Prostate gland (tissue), 2 donors: ENCODE measurements at regions of chr1 and their contacts with region 1.

Region 1: GRCh38 chr1:44002606-44003157 is 11.3 kb downstream of the CCDC24 start:
- DNase-seq: no peak
- H3K4me3 ChIP-seq: no peak overlapping the region
- H3K27ac ChIP-seq: no peak overlapping the region
- H3K4me1 ChIP-seq: no peaks in the 10 kb centered on the region
- H3K27me3 ChIP-seq: no peaks in the 10 kb centered on the region
- CTCF ChIP-seq: no peak
- POLR2A ChIP-seq: no peak

Region 2: DNA sequence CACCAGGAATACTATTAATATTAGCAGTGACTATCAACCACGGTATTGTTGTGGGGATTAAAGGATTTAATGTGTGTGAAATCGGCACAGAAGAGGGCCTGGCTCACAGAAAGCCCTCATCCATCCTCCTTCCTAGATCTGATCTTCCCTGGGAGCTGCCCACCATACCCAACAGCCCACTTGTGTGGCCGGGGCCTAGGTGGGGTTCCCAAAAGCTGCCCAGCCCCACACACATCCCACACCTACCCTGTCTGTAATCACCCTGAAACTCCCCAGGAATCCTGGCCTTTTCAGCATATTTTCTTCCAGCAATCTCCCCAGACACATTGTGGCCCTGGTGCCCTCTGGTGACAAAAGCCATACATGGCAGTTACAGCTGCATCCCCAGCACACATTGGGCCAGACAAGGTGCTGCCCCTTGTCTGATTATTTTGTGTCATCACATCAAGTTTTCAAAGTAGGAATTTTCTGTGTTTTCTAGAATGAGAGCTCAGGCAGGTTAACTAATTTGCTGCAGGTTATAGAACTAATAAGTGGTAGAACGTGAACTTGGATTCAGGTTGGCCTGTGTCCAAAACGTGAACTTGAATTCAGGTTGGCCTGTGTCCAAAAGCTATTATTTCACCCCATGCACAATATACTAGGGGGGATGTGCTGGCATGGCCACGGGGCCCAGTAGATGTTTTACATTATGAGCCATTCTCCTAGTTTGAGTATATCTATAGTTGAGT is 33.9 kb after region 1 on chr1:
- intact Hi-C with region 1: loop called (anchors 2 kb)
- DNase-seq: peak; percentile 61
- H3K4me3 ChIP-seq: no peak overlapping the region
- H3K27ac ChIP-seq: peak overlapping the region in 1 of 2 donors; percentile 28
- H3K4me1 ChIP-seq: no peaks in the 10 kb centered on the region
- H3K27me3 ChIP-seq: no peaks in the 10 kb centered on the region
- CTCF ChIP-seq: peak; percentile 43 to 86 (median 76)
- POLR2A ChIP-seq: no peak

Region 3: DNA sequence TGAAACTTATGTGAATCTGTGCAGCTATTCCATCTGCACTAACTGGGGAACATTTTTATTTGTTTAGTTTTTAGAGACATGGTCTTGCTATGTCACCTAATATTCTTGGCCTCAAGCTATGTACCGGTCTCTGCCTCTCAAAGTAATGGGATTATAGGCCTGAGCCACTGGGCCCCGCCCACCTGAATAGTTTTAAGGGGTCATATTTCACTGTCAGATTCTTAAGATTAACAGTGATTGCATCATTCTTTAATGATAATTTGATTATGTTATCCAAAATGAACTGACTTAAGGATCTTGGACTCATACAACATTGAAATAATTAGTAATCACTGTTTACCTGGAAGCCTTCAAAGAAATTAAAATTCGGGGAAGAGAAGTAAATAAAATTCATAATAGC is 151.4 kb after region 1 on chr1:
- intact Hi-C with region 1: no loop called
- DNase-seq: no peak
- H3K4me3 ChIP-seq: no peak overlapping the region
- H3K27ac ChIP-seq: no peak overlapping the region
- H3K4me1 ChIP-seq: no peaks in the 10 kb centered on the region
- H3K27me3 ChIP-seq: no peaks in the 10 kb centered on the region
- CTCF ChIP-seq: no peak
- POLR2A ChIP-seq: no peak